Caco-2 (cell line): ENCODE measurements at regions of chr2 and their contacts with region 1.

Region 1: DNA sequence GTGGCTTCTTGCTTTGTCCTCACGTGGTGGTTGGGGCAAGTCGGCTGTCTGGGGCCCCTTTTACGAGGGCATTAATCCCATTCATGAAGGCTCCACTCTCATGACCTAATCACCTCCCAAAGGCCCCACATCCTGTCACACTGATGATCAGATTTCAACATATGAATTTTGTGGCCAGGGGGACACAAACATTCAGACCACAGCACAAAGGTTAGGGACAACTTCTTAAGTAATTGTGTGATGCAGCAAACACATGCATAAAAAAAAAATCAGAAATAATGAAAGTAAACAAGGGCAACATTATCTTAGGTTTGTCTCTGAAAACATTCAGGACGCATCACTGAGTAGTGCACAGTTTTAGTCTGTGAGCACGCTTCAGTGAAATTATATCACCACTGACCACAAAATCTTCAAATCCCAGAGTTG is 54.2 kb upstream of the FRZB start:
- DNase-seq: no peak
- H3K4me3 ChIP-seq: no peak overlapping the region
- H3K4me3 Mint-ChIP-seq: no peak overlapping the region
- H3K27ac Mint-ChIP-seq: no peak overlapping the region
- H3K4me1 ChIP-seq: no peaks in the 10 kb centered on the region
- H3K4me1 Mint-ChIP-seq: no peaks in the 10 kb centered on the region
- H3K27me3 ChIP-seq: no peaks in the 10 kb centered on the region
- H3K27me3 Mint-ChIP-seq: no peaks in the 10 kb centered on the region
- CTCF ChIP-seq: no peak

Region 2: GRCh38 chr2:182784777-182785176 is 135.9 kb before region 1 on chr2:
- CTCF ChIA-PET with region 1: no interaction called
- POLR2A ChIA-PET with region 1: no interaction called
- intact Hi-C with region 1: loop called (anchors 5 kb)
- DNase-seq: peak in 1 of 2 experiments; percentile 48
- H3K4me3 ChIP-seq: no peak overlapping the region
- H3K4me3 Mint-ChIP-seq: no peak overlapping the region
- H3K27ac Mint-ChIP-seq: no peak overlapping the region
- H3K4me1 ChIP-seq: no peaks in the 10 kb centered on the region
- H3K4me1 Mint-ChIP-seq: no peaks in the 10 kb centered on the region
- H3K27me3 ChIP-seq: no peaks in the 10 kb centered on the region
- H3K27me3 Mint-ChIP-seq: no peaks in the 10 kb centered on the region
- CTCF ChIP-seq: peak; percentile 70 to 73

Region 3: DNA sequence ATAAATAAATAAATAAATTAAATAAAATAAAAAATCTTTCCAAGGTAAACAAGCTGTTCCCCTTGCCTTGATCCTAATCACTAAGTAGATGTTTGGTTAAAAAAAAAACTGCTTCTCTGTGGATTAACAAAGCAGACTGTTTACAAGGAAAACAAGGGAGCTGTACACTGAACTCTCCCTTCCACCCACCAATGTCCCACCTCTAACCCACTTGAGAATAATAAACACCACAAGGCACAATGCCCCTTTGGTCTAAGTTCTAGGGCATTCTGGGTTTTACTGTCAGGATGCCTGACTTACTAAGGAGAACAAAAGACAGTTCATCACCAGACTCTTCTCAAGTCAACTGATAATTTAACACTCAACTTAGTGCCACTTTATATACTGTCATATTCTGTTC is 34.1 kb after region 1 on chr2:
- CTCF ChIA-PET with region 1: no interaction called
- POLR2A ChIA-PET with region 1: no interaction called
- intact Hi-C with region 1: no loop called
- DNase-seq: no peak
- H3K4me3 ChIP-seq: no peak overlapping the region
- H3K4me3 Mint-ChIP-seq: no peak overlapping the region
- H3K27ac Mint-ChIP-seq: no peak overlapping the region
- H3K4me1 ChIP-seq: no peaks in the 10 kb centered on the region
- H3K4me1 Mint-ChIP-seq: no peaks in the 10 kb centered on the region
- H3K27me3 ChIP-seq: no peaks in the 10 kb centered on the region
- H3K27me3 Mint-ChIP-seq: no peaks in the 10 kb centered on the region
- CTCF ChIP-seq: no peak